PC-3 (cell line): ENCODE measurements at regions of chr1 and their contacts with region 1.

Region 1: DNA sequence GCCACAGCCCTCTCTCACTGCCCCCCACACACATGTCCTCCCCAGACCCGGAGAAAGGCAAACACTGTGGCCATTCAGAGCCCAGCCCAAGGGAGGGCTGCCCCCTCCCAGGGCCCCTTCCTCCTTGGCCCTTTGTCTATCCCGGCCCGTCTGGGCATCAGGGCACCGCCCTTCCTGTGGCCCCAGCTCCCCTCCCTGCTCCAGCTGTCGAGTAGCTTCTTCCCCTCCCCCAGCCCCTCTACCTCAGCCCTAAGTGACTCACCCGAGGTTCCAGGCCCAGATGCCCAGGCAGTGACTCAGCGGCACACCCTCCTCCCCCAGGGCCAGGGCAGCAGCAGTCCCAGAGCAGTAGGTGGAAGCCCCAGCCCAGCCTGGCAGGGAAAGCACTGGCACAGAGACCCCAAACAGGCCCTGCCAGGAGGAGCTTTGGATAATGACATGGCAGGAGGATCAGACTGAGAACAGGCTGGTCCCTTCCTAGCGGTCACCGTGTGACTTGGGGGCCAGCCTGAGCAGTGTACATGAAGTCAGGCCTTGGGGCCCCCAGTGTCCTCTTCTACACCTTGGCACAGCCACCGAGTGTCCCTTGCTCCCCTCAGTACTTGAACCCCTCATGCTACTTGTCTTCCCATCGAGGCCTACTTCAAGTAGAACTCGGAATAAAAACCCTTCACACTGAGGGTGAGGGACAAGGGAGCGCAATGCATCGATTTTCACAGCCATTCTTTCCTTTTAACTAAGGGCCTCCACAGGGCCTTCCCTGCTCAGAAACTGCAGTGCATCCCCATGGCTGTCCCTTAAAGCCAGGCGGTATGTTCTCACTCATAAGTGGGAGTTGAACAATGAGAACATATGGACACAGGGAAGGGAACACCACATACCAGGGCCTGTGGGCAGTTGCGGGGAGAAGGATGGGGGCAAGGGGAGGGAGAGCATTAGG is 1.1 kb upstream of the S100A2 start:
- DNase-seq: peak; percentile 99
- ATAC-seq: peak; percentile 66
- H3K4me3 ChIP-seq: peak overlapping the region; percentile 42
- H3K27ac ChIP-seq: peak overlapping the region; percentile 100
- H3K4me1 ChIP-seq: peaks cover 60% of the 10 kb centered on the region
- H3K27me3 ChIP-seq: no peaks in the 10 kb centered on the region
- CTCF ChIP-seq: no peak

Region 2: DNA sequence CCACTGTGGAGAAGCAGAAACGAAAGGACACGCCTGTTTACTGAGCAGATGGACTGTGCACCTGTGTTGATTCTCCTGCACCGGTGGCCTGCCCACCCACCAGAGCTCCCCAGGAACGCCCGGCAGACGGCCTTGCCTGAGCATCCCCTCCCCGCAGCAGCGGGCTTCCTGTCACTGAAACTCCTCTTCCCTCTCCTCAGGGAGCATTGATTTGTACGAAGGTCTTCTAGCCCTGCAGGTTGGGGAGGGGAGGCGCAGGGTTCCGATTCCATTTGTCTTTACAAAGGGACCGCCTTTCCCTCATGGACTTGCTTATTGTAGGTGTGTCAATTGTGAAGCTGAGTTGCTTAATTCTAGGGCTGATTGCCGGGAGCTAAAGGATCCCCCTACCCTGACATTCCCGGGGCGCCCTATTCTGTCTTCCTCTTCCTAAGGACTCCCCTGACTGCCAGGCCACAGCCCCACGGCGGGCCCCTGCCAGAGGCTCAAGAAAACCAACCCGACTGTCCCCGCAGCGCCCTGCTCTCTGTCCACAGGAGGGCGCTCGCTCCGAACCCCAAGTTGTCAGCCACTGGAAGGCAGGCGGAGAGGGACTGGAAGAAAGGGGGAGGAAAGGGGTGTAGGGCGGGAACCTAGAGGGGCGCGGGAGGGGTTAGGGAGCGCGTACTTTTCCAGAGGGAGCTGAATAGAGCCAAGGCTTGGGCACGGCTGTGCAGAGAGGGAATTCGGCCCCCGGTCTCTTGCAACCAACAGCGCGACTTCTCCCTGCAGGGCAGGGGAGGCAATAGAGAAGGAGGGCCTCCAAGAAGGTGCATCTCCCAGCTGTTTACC is 33.7 kb before region 1 on chr1:
- CTCF ChIA-PET with region 1: interaction called, 25 read pairs
- POLR2A ChIA-PET with region 1: interaction called, 47 read pairs
- intact Hi-C with region 1: loop called (anchors 1 kb)
- DNase-seq: peak; percentile 87
- ATAC-seq: peak; percentile 21
- H3K4me3 ChIP-seq: peak overlapping the region; percentile 28; the same call in 1 of the 2 replicates
- H3K27ac ChIP-seq: peak overlapping the region; percentile 94
- H3K4me1 ChIP-seq: peaks cover 46% of the 10 kb centered on the region
- H3K27me3 ChIP-seq: no peaks in the 10 kb centered on the region
- CTCF ChIP-seq: peak; percentile 96

Region 3: DNA sequence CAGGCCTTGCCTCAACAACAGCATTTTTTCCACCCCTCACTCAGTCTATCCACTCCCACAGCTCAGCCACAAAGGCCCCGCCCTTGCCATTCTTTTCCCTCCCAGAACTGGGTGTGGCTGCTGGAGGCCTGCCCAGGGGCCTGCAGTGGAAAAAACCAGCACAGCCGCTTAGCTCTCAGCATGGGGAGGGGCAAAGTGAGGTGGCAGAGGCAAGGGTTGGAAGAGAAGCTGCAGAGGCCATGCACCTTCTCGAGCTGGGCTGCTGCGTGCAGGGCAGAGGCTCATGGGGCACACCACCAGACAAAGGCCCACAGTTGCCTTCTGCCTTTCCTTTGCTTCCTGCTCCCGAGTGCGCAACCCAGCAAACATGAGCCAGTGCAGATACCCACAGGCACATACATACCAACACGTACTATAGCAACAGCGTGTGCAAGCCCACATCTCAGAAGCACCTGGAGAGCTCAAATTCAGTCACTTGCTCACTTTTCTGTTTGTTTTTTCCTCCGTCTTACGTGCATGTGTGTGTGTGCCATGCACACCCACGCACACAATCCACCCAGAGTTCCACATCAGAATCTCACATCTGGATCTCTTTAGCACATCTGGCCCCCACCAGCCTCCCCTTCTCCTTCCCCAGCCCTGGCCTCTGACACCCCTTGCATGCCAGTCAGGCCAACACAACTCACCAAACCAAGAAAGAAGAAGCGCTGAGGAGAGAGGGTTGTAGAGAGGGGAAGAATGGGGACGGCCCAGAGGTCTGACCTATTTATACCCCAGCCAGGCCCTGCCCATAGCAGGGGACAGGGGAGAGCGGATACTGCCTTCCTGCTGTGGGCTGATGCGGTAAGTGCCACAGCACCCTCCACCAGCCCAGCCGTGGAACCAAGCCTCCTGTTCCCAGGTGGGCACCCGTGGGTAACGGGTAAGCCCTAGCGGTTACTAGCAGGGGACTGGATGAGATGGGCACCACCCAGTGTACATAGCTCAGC is 21.3 kb before region 1 on chr1 and contains the start of gene S100A4:
- CTCF ChIA-PET with region 1: interaction called, 9 read pairs
- POLR2A ChIA-PET with region 1: interaction called, 10 read pairs
- intact Hi-C with region 1: loop called (anchors 1 kb)
- DNase-seq: peak; percentile 99
- ATAC-seq: peak; percentile 64
- H3K4me3 ChIP-seq: peak within 1 kb of the TSS; percentile 8; the same call in 1 of the 2 replicates
- H3K27ac ChIP-seq: peak within 1 kb of the TSS; percentile 82
- H3K4me1 ChIP-seq: peaks cover 69% of the 10 kb centered on the region
- H3K27me3 ChIP-seq: no peaks in the 10 kb centered on the region
- CTCF ChIP-seq: no peak
- total RNA-seq, gene S100A4: 32.2 and 55.8 TPM in 2 replicates

Region 4: GRCh38 chr1:153583976-153584375 is 17.3 kb after region 1 on chr1:
- CTCF ChIA-PET with region 1: no interaction called
- POLR2A ChIA-PET with region 1: interaction called, 13 read pairs
- intact Hi-C with region 1: no loop called
- DNase-seq: no peak
- ATAC-seq: no peak
- H3K4me3 ChIP-seq: no peak overlapping the region
- H3K27ac ChIP-seq: no peak overlapping the region
- H3K4me1 ChIP-seq: peaks cover 10% of the 10 kb centered on the region
- H3K27me3 ChIP-seq: no peaks in the 10 kb centered on the region
- CTCF ChIP-seq: no peak

Region 5: DNA sequence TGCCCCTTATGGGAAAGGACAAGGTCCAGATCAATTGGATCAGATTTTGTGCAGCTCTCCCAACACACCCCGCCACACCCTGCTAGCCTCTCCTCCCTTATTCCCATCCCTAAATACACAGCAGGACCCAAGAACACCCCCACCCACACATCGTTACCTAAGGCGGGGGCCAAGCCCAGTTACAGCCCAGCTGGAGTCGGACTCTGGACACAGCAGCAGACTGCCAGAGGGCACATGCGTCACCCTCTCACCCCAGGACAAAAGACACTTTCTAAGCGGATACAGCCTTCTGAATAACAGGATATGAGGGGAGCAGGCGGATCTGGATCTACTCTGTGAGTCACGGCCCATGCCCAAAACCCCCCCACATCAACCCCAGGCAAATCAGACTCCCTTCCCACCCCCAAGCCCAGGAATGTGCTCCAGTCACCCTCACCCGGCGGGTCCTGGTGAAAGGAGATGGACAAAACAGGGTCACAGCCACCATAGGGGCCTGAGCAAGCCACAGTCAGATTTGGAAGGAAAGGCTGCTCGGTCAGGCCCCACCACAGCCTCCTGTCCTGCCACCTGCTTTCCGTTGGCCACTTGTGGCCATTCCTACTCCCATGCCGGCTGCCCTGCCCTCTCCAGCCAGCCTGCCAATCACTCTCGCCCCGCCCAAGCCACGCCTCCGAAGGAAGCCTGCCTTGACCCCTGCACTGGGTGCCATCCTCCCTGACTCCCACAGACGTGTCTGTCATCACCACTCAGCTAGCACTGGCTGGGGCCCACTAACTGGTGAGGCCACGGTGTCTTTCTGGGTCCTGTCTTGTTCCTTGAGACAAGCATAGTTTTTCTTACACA is 42.3 kb after region 1 on chr1:
- CTCF ChIA-PET with region 1: interaction called, 9 read pairs
- POLR2A ChIA-PET with region 1: interaction called, 12 read pairs
- intact Hi-C with region 1: loop called (anchors 1 kb)
- DNase-seq: peak; percentile 99
- ATAC-seq: peak; percentile 58
- H3K4me3 ChIP-seq: peak overlapping the region; percentile 68
- H3K27ac ChIP-seq: peak overlapping the region; percentile 100
- H3K4me1 ChIP-seq: peaks cover 50% of the 10 kb centered on the region
- H3K27me3 ChIP-seq: no peaks in the 10 kb centered on the region
- CTCF ChIP-seq: no peak

Region 6: DNA sequence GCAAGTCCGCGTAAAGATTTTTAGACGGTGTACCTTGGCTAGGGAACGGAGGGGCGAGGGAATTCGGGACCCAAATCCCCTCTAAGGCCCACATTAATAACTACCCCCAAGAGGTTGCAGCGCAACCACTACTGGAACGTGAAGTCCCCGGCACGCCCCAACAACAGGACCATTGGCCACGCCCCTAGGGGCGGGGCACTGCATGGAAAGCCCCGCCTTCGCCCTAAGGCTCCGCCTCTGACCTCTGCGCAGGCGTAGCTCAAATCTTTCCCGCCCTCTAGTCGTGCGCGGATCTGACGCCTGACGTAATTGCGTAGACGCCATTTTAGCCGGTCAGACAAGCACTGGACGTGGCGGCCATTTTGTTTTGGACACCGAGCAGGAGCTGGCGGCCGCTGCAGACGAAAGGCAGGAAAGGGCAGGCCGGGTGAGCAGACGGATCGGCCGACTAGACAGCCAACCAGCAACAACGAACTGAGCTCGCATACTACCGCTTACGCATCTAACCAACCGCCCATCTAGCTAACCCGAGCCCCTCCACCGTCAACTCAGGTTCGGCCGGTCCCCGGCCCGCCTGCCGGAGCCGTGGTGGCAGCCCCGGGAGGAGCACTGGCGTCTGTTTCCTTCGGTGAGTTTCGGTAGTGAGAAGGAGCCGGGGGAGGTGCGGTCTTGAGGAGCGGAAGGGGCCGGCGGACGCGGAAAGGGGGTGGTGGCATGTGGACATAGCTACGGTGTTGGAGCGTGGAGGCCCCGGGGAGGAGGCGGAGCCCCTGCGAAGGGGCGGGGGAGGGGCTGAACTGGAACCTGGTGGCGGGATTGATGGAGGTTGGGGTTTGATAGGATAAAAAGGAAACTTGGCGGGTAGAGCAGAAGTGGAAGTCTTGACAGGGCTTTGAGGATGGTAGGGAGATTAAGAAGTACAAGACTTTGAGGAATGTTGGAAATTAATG is 67.3 kb after region 1 on chr1 and contains the start of gene CHTOP:
- CTCF ChIA-PET with region 1: interaction called, 25 read pairs
- POLR2A ChIA-PET with region 1: interaction called, 20 read pairs
- intact Hi-C with region 1: no loop called
- DNase-seq: peak; percentile 100
- ATAC-seq: peak; percentile 88
- H3K4me3 ChIP-seq: peak within 1 kb of the TSS; percentile 83
- H3K27ac ChIP-seq: peak within 1 kb of the TSS; percentile 97
- H3K4me1 ChIP-seq: peaks cover 18% of the 10 kb centered on the region
- H3K27me3 ChIP-seq: no peaks in the 10 kb centered on the region
- CTCF ChIP-seq: no peak
- total RNA-seq, gene CHTOP: 101 and 112 TPM in 2 replicates

Region 7: GRCh38 chr1:153670257-153670858 is 103.6 kb after region 1 on chr1:
- CTCF ChIA-PET with region 1: no interaction called
- POLR2A ChIA-PET with region 1: no interaction called
- intact Hi-C with region 1: no loop called
- DNase-seq: no peak
- ATAC-seq: no peak
- H3K4me3 ChIP-seq: peak overlapping the region; percentile 89
- H3K27ac ChIP-seq: peak overlapping the region; percentile 42
- H3K4me1 ChIP-seq: peaks cover 17% of the 10 kb centered on the region
- H3K27me3 ChIP-seq: no peaks in the 10 kb centered on the region
- CTCF ChIP-seq: no peak